HepG2 (cell line): ENCODE measurements at regions of chr10 and their contacts with region 1.

Region 1: DNA sequence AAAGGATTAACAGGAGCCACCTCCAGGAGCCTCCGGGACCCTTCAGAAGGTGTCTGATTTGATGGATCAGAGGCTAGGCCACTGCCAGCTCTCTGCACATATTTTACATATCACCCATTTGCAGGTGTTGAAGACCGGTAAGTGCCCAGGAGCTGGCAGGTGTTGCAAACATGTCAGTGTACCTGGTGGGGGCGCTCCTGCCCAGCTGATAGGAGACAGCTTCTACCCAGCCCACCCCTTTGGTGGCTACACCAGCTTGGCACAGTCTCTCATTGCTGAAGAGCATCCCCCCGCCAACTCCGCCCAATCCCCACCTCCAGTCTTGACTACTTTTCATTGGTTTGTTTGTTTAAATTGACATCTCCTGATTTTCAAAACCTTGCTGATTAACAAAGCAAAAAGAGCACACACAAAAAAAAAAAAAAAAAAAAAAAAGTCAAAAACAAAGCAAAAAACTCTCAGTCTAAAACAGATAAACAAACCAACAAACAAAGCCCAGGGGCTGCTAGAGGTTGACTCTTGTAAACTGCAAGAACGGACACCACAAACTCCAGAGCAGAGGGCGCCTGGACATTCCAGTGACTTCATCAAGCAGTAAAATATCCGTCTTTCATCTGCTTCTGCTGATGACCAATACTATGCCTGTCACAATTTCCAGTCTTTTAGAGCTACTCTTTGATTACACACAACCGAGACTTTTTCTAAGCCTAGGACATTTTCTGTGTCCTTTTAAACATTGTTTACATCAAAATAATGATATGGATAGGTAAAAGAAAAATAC is 275.3 kb downstream of the NRG3 start:
- DNase-seq: no peak
- ATAC-seq: no peak
- H3K4me3 ChIP-seq: no peak overlapping the region
- H3K27ac ChIP-seq: no peak overlapping the region
- H3K4me1 ChIP-seq: no peaks in the 10 kb centered on the region
- H3K27me3 ChIP-seq: no peaks in the 10 kb centered on the region
- CTCF ChIP-seq: no peak
- EP300 ChIP-seq: no peak
- POLR2A ChIP-seq: no peak
- RAD21 ChIP-seq: no peak

Region 2: DNA sequence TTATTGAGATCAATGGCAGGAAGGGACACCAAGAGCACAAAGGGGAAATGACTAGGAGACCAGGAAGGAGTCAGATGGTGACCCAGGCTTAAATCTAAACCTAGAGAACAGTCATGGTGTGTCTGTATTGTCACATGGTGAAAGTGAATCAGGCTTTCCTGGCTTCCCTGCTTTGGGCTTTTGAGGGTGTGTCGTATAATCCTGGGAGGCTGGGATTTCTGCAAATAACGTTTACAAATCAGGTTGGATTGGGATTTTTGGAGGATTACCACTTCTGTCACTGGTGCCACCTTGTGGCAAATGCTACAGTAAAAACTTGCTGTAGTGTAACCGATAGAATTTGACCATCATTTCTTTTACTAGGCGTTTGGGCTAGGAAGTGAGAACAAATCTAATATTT is 227.3 kb after region 1 on chr10:
- CTCF ChIA-PET with region 1: no interaction called
- POLR2A ChIA-PET with region 1: no interaction called
- in situ Hi-C with region 1: no loop called
- intact Hi-C with region 1: loop called (anchors 5 kb)
- DNase-seq: no peak
- ATAC-seq: no peak
- H3K4me3 ChIP-seq: no peak overlapping the region
- H3K27ac ChIP-seq: no peak overlapping the region
- H3K4me1 ChIP-seq: no peaks in the 10 kb centered on the region
- H3K27me3 ChIP-seq: no peaks in the 10 kb centered on the region
- CTCF ChIP-seq: no peak
- EP300 ChIP-seq: no peak
- POLR2A ChIP-seq: no peak
- RAD21 ChIP-seq: no peak

Region 3: DNA sequence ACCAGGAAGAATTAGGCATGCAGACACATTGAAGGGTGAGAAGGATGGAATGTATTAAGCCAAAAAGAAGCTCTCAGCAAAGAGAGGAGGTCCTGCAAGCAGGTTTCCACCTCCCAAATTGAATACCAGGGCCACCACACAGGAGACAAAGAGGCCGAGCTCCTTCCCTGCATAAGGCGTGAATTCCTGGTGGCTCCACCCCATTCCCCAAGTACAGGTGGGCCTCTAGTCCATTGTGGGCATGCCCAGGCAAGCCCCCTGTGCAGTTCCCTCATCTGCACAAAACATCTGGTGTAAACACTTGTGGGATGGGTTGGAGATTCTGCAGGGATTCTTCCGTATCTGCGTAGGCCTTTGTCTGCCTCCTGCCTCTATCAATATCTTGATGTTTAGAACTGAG is 542.1 kb after region 1 on chr10:
- CTCF ChIA-PET with region 1: no interaction called
- POLR2A ChIA-PET with region 1: no interaction called
- in situ Hi-C with region 1: no loop called
- intact Hi-C with region 1: no loop called
- DNase-seq: no peak
- ATAC-seq: no peak
- H3K4me3 ChIP-seq: no peak overlapping the region
- H3K27ac ChIP-seq: no peak overlapping the region
- H3K4me1 ChIP-seq: no peaks in the 10 kb centered on the region
- H3K27me3 ChIP-seq: no peaks in the 10 kb centered on the region
- CTCF ChIP-seq: no peak
- EP300 ChIP-seq: no peak
- POLR2A ChIP-seq: no peak
- RAD21 ChIP-seq: no peak